A549 (cell line): ENCODE measurements at regions of chr7 and their contacts with region 1.

Region 1: GRCh38 chr7:5494683-5495561 is 71.3 kb upstream of the TNRC18 start:
- DNase-seq: peak; percentile 86 to 88
- ATAC-seq: peak; percentile 80 to 87
- H3K4me3 ChIP-seq: no peak overlapping the region
- H3K27ac ChIP-seq: peak overlapping the region; percentile 66 to 81
- H3K4me1 ChIP-seq: peaks cover 24% of the 10 kb centered on the region
- CTCF ChIP-seq: peak; percentile 93
- EP300 ChIP-seq: no peak
- POLR2A ChIP-seq: no peak
- RAD21 ChIP-seq: peak; percentile 98

Region 2: GRCh38 chr7:5408777-5409176 is 86.1 kb before region 1 on chr7:
- CTCF ChIA-PET with region 1: no interaction called
- POLR2A ChIA-PET with region 1: no interaction called
- DNase-seq: no peak
- ATAC-seq: peak in 1 of 2 experiments; percentile 36; a peak in 2 of 6 replicates
- H3K4me3 ChIP-seq: no peak overlapping the region
- H3K27ac ChIP-seq: no peak overlapping the region
- H3K4me1 ChIP-seq: peaks cover 16% of the 10 kb centered on the region
- CTCF ChIP-seq: no peak
- EP300 ChIP-seq: no peak
- POLR2A ChIP-seq: no peak
- RAD21 ChIP-seq: no peak

Region 3: GRCh38 chr7:5484921-5485320 is 10.0 kb before region 1 on chr7:
- CTCF ChIA-PET with region 1: interaction called, 12 read pairs
- POLR2A ChIA-PET with region 1: no interaction called
- DNase-seq: no peak
- ATAC-seq: no peak
- H3K4me3 ChIP-seq: no peak overlapping the region
- H3K27ac ChIP-seq: no peak overlapping the region
- H3K4me1 ChIP-seq: peaks cover 4% of the 10 kb centered on the region; the same call in 2 of the 3 replicates
- CTCF ChIP-seq: no peak
- EP300 ChIP-seq: no peak
- POLR2A ChIP-seq: no peak
- RAD21 ChIP-seq: no peak

Region 4: DNA sequence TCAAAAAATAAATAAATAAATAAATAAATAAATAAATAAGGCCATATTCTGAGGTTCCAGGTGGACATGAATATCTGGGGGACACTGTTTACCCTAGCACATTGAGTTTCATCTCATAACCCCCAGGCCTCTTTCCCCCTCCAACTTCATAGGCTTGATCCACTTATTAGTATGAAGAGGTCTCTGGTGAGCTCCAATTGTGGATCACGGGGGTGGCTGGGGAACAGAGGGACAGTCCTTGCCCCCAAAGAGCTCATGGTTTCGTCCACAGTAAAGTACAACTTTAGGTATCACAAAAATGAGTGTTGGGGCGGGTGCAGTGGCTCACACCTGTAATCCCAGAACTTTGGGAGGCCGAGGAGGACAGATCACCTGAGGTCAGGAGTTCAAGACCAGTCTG is 22.1 kb after region 1 on chr7:
- CTCF ChIA-PET with region 1: interaction called, 71 read pairs
- POLR2A ChIA-PET with region 1: no interaction called
- DNase-seq: no peak
- ATAC-seq: no peak
- H3K4me3 ChIP-seq: no peak overlapping the region
- H3K27ac ChIP-seq: peak overlapping the region in 1 of 2 experiments; percentile 44; a peak in 3 of 6 replicates
- H3K4me1 ChIP-seq: peaks cover 26% of the 10 kb centered on the region
- CTCF ChIP-seq: no peak
- EP300 ChIP-seq: no peak
- POLR2A ChIP-seq: no peak
- RAD21 ChIP-seq: no peak

Region 5: DNA sequence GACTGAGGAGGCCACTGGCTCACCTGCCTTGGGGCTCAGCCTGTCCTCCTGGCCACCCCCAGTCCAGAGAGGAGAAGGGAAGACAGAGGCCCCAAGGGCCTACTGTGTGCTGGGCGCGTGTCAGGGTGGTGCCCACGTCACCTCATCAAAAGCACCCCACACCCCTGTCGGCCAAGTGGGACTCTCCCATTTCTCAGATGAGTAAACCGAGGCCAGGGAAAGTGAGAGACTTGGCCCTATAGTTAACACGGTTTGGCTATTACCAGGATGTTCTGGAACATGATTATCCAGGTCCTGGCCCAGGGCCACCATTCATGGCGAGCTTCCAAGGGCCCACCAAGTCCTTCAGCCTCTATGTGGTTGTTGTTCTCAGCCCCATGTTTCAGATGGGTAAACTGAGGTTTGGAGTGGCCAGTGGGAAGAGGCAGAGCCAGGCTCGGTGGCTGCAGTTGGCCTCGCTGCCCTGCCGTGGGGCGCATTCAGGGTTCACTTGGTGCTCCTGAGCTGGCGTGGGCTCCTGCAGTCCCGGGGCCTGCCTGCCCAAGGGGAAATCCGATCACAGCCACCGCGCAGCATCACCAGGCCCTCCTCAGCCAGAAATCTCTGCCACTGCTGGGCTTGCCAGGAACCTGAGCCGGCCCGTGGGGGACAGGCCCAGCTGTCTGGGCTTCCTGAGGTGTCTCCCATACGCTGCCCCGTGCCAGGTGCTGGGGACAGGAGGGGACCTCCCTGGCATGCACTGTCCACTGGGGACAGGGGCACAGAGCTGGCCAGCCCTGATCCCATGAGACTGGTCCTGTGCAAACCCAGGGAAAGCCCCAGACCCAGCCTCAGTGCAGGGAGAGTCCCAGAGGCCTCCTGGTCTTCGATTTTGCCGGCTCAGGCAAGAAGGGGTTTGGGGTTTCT is 46.4 kb after region 1 on chr7:
- CTCF ChIA-PET with region 1: interaction called, 14 read pairs
- POLR2A ChIA-PET with region 1: no interaction called
- DNase-seq: no peak
- ATAC-seq: peak; percentile 40 to 59; a peak in 5 of 6 replicates
- H3K4me3 ChIP-seq: no peak overlapping the region
- H3K27ac ChIP-seq: peak overlapping the region in 1 of 2 experiments; percentile 32; a peak in 1 of 6 replicates
- H3K4me1 ChIP-seq: no peaks in the 10 kb centered on the region
- CTCF ChIP-seq: no peak
- EP300 ChIP-seq: no peak
- POLR2A ChIP-seq: no peak
- RAD21 ChIP-seq: no peak

Region 6: GRCh38 chr7:5677538-5678294 is 182.8 kb after region 1 on chr7:
- CTCF ChIA-PET with region 1: interaction called, 51 read pairs
- POLR2A ChIA-PET with region 1: no interaction called
- DNase-seq: peak; percentile 55 to 70
- ATAC-seq: peak; percentile 89 to 90
- H3K4me3 ChIP-seq: no peak overlapping the region
- H3K27ac ChIP-seq: peak overlapping the region; percentile 21 to 54; a peak in 4 of 6 replicates
- H3K4me1 ChIP-seq: peaks cover 13% of the 10 kb centered on the region
- CTCF ChIP-seq: peak; percentile 77
- EP300 ChIP-seq: no peak
- POLR2A ChIP-seq: no peak
- RAD21 ChIP-seq: peak; percentile 81 to 86

Region 7: DNA sequence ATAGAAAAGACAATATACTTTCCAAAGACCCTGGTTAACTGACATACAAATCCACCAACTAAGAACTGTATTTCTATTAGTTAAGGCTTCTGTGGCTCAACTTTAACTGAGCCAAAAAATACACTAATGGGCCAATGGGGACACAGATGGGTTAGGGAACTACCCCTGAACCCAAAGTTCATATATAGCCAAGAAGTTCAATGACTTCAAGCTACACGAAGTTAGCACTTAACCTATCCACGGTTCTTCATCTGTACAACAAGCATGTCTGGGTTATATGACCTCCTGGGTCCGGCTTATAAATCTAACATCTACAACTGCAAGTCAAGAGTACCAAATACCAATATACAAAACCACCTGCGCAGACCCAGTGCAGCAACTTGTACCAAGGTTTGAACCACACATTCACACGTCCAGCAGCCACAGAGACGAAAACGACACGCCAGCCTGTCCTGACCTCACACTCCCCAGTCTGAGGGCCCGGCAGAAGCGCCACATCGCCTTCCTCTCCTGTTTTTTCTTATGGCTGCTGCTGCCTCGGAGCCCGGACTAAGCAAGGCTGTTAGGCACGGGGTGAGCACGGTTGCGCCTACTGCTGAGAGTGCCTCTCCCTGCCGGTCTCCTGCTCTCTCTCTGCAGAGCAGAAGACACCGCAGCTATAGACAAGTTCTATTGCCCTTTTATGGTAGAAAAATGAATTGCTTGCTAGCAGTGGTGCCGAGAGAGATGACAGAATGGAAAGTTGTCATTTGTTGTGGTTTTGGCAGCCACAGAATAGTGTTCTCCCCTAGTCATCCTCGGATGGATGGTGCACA is 200.2 kb after region 1 on chr7:
- CTCF ChIA-PET with region 1: interaction called, 14 read pairs
- POLR2A ChIA-PET with region 1: no interaction called
- DNase-seq: no peak
- ATAC-seq: no peak
- H3K4me3 ChIP-seq: no peak overlapping the region
- H3K27ac ChIP-seq: peak overlapping the region; percentile 86 to 95; a peak in 5 of 6 replicates
- H3K4me1 ChIP-seq: peaks cover 46% of the 10 kb centered on the region
- CTCF ChIP-seq: no peak
- EP300 ChIP-seq: no peak
- POLR2A ChIP-seq: no peak
- RAD21 ChIP-seq: no peak